CD14-positive monocyte (primary cell): ENCODE measurements at regions of chr1 and their contacts with region 1.

Region 1: DNA sequence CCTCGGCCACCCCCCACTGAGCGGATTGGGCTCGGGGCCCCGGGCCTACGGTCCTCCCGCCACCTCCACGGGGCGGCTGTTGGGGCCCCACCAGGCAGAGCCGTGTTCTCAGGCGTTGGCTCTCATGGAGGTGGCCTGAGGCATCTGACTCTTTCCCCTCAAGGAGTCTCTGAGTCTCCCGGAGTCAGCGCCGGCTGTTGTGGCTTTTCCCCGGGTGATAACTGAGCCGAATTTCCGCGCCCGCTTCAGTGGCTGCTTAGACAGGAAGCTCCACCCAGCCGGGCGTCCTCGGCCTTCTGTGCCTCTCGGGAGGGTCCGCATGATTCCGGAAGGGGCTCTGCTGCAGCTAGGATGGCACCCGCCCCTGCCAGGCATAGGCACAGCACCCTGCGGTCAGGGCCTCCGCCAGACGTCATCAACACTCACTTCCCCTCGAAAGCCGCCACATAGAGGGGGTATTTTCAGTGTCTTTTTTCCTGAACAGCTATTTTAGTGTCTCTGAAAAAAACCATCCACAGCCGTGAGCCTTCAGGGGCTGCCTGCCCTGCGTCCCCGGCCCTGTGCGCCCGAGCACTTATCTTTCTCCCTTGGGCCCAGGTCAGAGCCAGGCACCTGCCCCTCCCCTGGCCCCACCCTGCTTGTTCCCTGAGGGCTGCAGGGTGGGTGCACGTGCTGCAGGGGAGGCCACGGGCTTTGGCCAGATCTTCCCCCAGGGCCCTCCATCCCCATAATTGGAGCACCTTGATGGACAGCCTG is 72.9 kb downstream of the SKI start:
- DNase-seq: peak; percentile 94 to 96 (median 95)
- H3K4me3 ChIP-seq: peak overlapping the region; percentile 8 to 65 (median 50)
- H3K4me3 Mint-ChIP-seq: peak overlapping the region; percentile 74 to 85
- H3K27ac ChIP-seq: peak overlapping the region; percentile 68 to 81
- H3K27ac Mint-ChIP-seq: peak overlapping the region; percentile 75 to 94 (median 91)
- H3K4me1 ChIP-seq: peaks cover 33 to 51% of the 10 kb centered on the region in 2 donors
- H3K4me1 Mint-ChIP-seq: peaks cover 40% of the 10 kb centered on the region
- H3K27me3 ChIP-seq: peaks cover 0 to 19% of the 10 kb centered on the region in 2 donors
- H3K27me3 Mint-ChIP-seq: peaks cover 22 to 38% (median 32%) of the 10 kb centered on the region in 3 donors
- CTCF ChIP-seq: no peak

Region 2: DNA sequence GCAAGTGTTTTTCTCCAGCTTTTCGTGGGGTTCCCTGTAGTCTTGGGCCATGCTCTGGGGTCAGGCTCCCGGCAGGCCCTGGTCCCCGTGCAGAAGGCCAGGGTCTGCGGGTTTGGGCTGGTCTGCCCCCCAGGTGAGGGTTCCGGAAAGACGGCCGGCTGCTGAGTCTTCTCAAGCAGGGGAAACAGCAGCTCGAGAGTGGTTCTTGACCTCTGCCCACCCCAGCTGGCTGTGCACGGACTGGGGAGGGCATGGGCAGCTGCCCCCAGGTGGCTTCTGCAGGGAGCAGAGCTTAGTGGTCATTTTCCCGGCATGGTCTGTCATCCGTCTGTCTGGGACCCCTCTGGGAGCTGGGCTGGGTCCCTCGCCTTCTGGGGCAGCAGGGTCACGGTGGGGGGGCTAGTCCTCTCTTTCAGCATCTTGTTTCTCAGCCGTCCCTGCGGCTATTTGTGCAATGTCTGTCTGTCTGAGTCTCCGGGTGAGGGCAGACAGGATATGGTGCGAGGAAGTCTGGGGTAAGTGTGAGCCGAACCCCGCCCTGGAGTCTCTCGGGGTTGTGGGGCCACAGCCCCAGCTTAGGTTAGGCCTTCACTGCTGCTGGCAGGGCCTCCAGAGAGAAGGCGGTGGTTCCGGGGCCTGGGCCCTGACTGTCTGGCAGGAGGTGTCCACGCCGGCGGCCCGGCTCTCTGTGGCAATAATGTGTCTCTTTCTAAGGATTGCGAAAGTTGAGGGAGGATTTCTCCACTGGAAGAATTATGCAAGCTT is 66.8 kb before region 1 on chr1:
- intact Hi-C with region 1: loop called in 1 of 2 experiments (anchors 2 kb)
- DNase-seq: peak; percentile 97 to 99 (median 98)
- H3K4me3 ChIP-seq: peak overlapping the region in 2 of 3 experiments; percentile 22 to 80
- H3K4me3 Mint-ChIP-seq: peak overlapping the region; percentile 83 to 100
- H3K27ac ChIP-seq: peak overlapping the region; percentile 83 to 90
- H3K27ac Mint-ChIP-seq: peak overlapping the region; percentile 90 to 95 (median 94)
- H3K4me1 ChIP-seq: peaks cover 88 to 98% of the 10 kb centered on the region in 2 donors
- H3K4me1 Mint-ChIP-seq: peaks cover 85% of the 10 kb centered on the region
- H3K27me3 ChIP-seq: no peaks in the 10 kb centered on the region
- H3K27me3 Mint-ChIP-seq: peaks cover under 1 to 16% (median 2%) of the 10 kb centered on the region in 3 donors
- CTCF ChIP-seq: no peak

Region 3: DNA sequence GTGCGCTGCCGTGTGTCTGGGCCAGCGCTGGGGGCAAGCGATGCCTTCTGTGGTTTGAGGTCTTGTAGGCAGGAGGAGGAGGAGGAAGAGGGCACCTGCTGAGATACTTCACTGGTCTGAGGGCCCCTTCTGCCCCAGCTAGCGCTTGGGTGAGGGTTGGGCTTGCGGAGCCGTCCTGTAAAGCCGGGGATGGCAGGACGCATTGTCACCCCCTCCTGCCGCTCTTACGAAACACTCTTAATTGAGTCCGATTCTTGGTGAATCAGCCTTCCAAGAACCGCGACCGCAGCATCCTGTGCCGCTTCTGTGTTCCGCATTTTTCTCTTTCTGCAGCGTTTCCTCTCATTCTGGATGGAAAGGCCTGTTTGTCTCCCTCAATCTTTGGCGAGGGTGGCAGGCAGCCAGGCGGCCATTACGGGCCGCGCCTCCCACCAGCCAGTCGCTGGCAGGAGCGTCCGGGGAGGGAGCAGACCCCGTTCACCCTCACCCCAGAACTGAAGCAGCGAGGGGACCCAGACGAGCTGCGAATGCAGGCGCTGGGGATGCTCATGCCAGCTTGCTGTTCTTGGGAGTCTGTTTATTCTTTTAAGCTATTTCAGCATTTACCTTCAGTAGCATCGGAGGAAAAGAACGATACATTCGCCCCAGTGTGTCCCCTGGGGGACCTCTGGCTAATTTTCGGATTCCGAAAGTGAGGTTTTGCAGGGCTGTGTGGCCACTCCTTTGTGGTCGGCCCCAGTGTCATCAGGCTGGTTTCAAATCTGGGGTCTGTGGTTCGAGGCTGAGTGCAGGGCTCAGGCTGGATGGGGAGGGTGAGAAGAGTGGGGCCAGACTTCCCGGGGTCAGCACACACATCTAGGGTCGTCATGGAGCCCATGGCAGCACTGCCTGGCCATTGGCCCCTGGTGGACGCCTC is 10.2 kb before region 1 on chr1:
- intact Hi-C with region 1: loop called in 1 of 2 experiments (anchors 1 kb)
- DNase-seq: peak; percentile 96 to 99 (median 98)
- H3K4me3 ChIP-seq: peak overlapping the region in 2 of 3 experiments; percentile 2 to 68
- H3K4me3 Mint-ChIP-seq: peak overlapping the region; percentile 72 to 87
- H3K27ac ChIP-seq: peak overlapping the region in 1 of 2 donors; percentile 43
- H3K27ac Mint-ChIP-seq: peak overlapping the region; percentile 82 to 92 (median 88)
- H3K4me1 ChIP-seq: peaks cover 42 to 63% of the 10 kb centered on the region in 2 donors
- H3K4me1 Mint-ChIP-seq: peaks cover 55% of the 10 kb centered on the region
- H3K27me3 ChIP-seq: peaks cover 0 to 60% of the 10 kb centered on the region in 2 donors
- H3K27me3 Mint-ChIP-seq: peaks cover 63 to 82% (median 68%) of the 10 kb centered on the region in 3 donors
- CTCF ChIP-seq: no peak